CD8-positive, alpha-beta T cell (primary cell): ENCODE measurements at regions of chr12 and their contacts with region 1.

Region 1: GRCh38 chr12:44930972-44931600 is 55.0 kb upstream of the NELL2 start:
- DNase-seq: peak in 3 of 9 experiments; percentile 11 to 76 (median 63)
- ATAC-seq: peak; percentile 58
- H3K4me3 ChIP-seq: no peak overlapping the region
- H3K4me3 Mint-ChIP-seq: no peak overlapping the region
- H3K27ac ChIP-seq: no peak overlapping the region
- H3K27ac Mint-ChIP-seq: no peak overlapping the region
- H3K4me1 ChIP-seq: peaks cover 5% of the 10 kb centered on the region
- H3K4me1 Mint-ChIP-seq: peaks cover 10% of the 10 kb centered on the region
- H3K27me3 ChIP-seq: no peaks in the 10 kb centered on the region
- H3K27me3 Mint-ChIP-seq: no peaks in the 10 kb centered on the region
- CTCF ChIP-seq: peak; percentile 80

Region 2: GRCh38 chr12:43957732-43958372 is 973.2 kb before region 1 on chr12:
- CTCF ChIA-PET with region 1: no interaction called
- POLR2A ChIA-PET with region 1: no interaction called
- intact Hi-C with region 1: loop called in 1 of 2 experiments (anchors 1 kb)
- DNase-seq: peak in 2 of 9 experiments; percentile 30 to 45
- ATAC-seq: no peak
- H3K4me3 ChIP-seq: no peak overlapping the region
- H3K4me3 Mint-ChIP-seq: no peak overlapping the region
- H3K27ac ChIP-seq: no peak overlapping the region
- H3K27ac Mint-ChIP-seq: no peak overlapping the region
- H3K4me1 ChIP-seq: no peaks in the 10 kb centered on the region
- H3K4me1 Mint-ChIP-seq: peaks cover 6% of the 10 kb centered on the region
- H3K27me3 ChIP-seq: no peaks in the 10 kb centered on the region
- H3K27me3 Mint-ChIP-seq: no peaks in the 10 kb centered on the region
- CTCF ChIP-seq: no peak

Region 3: DNA sequence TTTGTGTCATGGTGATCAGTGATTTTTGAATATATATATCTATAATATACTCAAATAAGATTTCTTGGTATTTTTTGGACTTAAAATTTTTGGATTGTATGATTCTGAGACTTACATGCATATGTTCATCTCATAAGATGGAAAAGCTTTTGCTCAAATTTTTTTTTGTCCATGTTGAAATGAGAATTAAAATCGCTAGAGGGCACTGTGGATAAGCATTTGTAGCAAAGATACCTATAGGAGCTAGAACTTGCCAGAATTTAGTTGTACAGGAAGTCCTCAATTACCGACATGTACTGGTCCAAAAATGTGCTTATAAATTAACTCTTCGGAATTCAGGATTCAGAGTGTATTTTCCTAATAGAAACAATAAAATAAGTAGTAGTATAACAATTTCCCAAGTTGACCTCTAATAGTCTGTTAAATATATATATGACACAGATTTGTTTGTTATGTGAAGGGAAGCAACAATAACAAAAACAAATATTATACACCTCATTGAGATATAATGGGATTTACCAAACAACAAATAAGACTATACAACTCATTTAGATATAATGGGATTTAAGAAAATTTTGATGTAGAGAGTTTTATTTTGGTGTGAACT is 915.6 kb before region 1 on chr12:
- CTCF ChIA-PET with region 1: interaction called, 11 read pairs
- POLR2A ChIA-PET with region 1: no interaction called
- intact Hi-C with region 1: loop called (anchors 1 kb)
- DNase-seq: peak in 2 of 9 experiments; percentile 48 to 65
- ATAC-seq: peak; percentile 52
- H3K4me3 ChIP-seq: no peak overlapping the region
- H3K4me3 Mint-ChIP-seq: no peak overlapping the region
- H3K27ac ChIP-seq: no peak overlapping the region
- H3K27ac Mint-ChIP-seq: no peak overlapping the region
- H3K4me1 ChIP-seq: no peaks in the 10 kb centered on the region
- H3K4me1 Mint-ChIP-seq: peaks cover 2% of the 10 kb centered on the region
- H3K27me3 ChIP-seq: no peaks in the 10 kb centered on the region
- H3K27me3 Mint-ChIP-seq: no peaks in the 10 kb centered on the region
- CTCF ChIP-seq: peak; percentile 71

Region 4: DNA sequence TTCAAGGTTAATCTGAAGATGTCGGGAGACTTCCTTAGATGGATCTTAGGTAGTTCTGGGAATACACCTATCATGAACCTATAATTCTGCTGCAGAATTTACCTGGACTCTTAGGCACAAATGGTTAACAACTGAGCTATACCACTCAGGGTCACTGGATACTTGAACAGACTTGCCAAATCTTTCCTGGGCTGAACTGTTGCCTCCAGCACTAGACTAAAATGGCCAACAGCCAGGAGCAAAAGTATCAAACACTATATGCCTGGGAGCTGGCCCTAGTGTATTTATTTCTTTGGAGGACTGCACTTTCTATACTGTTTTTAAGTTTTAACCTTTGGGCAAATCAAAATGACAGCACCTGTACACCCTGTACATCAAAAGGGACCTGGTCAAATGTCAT is 842.4 kb before region 1 on chr12:
- CTCF ChIA-PET with region 1: no interaction called
- POLR2A ChIA-PET with region 1: no interaction called
- intact Hi-C with region 1: no loop called
- DNase-seq: no peak
- ATAC-seq: no peak
- H3K4me3 ChIP-seq: no peak overlapping the region
- H3K4me3 Mint-ChIP-seq: no peak overlapping the region
- H3K27ac ChIP-seq: no peak overlapping the region
- H3K27ac Mint-ChIP-seq: no peak overlapping the region
- H3K4me1 ChIP-seq: no peaks in the 10 kb centered on the region
- H3K4me1 Mint-ChIP-seq: no peaks in the 10 kb centered on the region
- H3K27me3 ChIP-seq: no peaks in the 10 kb centered on the region
- H3K27me3 Mint-ChIP-seq: no peaks in the 10 kb centered on the region
- CTCF ChIP-seq: no peak

Region 5: GRCh38 chr12:44317651-44318126 is 613.4 kb before region 1 on chr12:
- CTCF ChIA-PET with region 1: interaction called, 8 read pairs
- POLR2A ChIA-PET with region 1: no interaction called
- intact Hi-C with region 1: loop called in 1 of 2 experiments (anchors 5 kb)
- DNase-seq: peak in 2 of 9 experiments; percentile 12 to 26
- ATAC-seq: no peak
- H3K4me3 ChIP-seq: no peak overlapping the region
- H3K4me3 Mint-ChIP-seq: no peak overlapping the region
- H3K27ac ChIP-seq: no peak overlapping the region
- H3K27ac Mint-ChIP-seq: no peak overlapping the region
- H3K4me1 ChIP-seq: no peaks in the 10 kb centered on the region
- H3K4me1 Mint-ChIP-seq: no peaks in the 10 kb centered on the region
- H3K27me3 ChIP-seq: no peaks in the 10 kb centered on the region
- H3K27me3 Mint-ChIP-seq: no peaks in the 10 kb centered on the region
- CTCF ChIP-seq: no peak

Region 6: GRCh38 chr12:44510510-44510909 is 420.6 kb before region 1 on chr12:
- CTCF ChIA-PET with region 1: interaction called, 4 read pairs
- POLR2A ChIA-PET with region 1: no interaction called
- intact Hi-C with region 1: loop called in 1 of 2 experiments (anchors 10 kb)
- DNase-seq: no peak
- ATAC-seq: no peak
- H3K4me3 ChIP-seq: no peak overlapping the region
- H3K4me3 Mint-ChIP-seq: no peak overlapping the region
- H3K27ac ChIP-seq: no peak overlapping the region
- H3K27ac Mint-ChIP-seq: no peak overlapping the region
- H3K4me1 ChIP-seq: no peaks in the 10 kb centered on the region
- H3K4me1 Mint-ChIP-seq: no peaks in the 10 kb centered on the region
- H3K27me3 ChIP-seq: no peaks in the 10 kb centered on the region
- H3K27me3 Mint-ChIP-seq: no peaks in the 10 kb centered on the region
- CTCF ChIP-seq: no peak

Region 7: DNA sequence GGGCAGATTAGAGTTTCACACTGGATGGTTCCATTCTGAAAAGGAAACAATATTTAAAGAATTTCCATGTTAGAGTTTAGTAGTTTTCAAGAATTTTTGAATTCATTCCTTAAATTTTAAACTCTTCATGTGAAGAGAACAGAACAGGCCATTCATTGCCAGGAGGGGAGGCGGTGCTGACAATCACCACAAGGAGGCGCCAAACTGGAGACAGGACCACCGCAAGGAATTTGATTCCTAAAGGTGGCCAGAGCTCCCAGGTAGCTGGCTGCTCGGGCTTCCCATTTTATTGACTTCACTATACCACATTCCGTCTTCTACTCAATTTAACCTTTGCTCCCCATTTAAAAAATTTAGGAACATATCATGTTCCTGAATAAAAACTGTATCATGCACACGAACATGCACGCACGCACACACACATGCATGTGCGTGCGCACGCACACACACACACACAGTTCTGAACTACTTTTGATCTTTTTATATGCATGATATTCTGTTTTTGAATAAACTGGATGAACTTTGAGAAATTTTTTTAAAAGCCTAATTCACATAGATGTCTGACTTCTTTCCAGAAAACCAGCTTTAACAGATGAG is 156.2 kb before region 1 on chr12:
- CTCF ChIA-PET with region 1: interaction called, 30 read pairs
- POLR2A ChIA-PET with region 1: no interaction called
- intact Hi-C with region 1: loop called (anchors 1 kb)
- DNase-seq: peak; percentile 37 to 81 (median 67)
- ATAC-seq: peak; percentile 58
- H3K4me3 ChIP-seq: no peak overlapping the region
- H3K4me3 Mint-ChIP-seq: no peak overlapping the region
- H3K27ac ChIP-seq: no peak overlapping the region
- H3K27ac Mint-ChIP-seq: no peak overlapping the region
- H3K4me1 ChIP-seq: no peaks in the 10 kb centered on the region
- H3K4me1 Mint-ChIP-seq: peaks cover 15% of the 10 kb centered on the region
- H3K27me3 ChIP-seq: no peaks in the 10 kb centered on the region
- H3K27me3 Mint-ChIP-seq: no peaks in the 10 kb centered on the region
- CTCF ChIP-seq: peak; percentile 93

Region 8: GRCh38 chr12:44960423-44960822 is 29.3 kb after region 1 on chr12:
- CTCF ChIA-PET with region 1: no interaction called
- POLR2A ChIA-PET with region 1: no interaction called
- intact Hi-C with region 1: no loop called
- DNase-seq: no peak
- ATAC-seq: no peak
- H3K4me3 ChIP-seq: no peak overlapping the region
- H3K4me3 Mint-ChIP-seq: no peak overlapping the region
- H3K27ac ChIP-seq: no peak overlapping the region
- H3K27ac Mint-ChIP-seq: no peak overlapping the region
- H3K4me1 ChIP-seq: no peaks in the 10 kb centered on the region
- H3K4me1 Mint-ChIP-seq: no peaks in the 10 kb centered on the region
- H3K27me3 ChIP-seq: no peaks in the 10 kb centered on the region
- H3K27me3 Mint-ChIP-seq: no peaks in the 10 kb centered on the region
- CTCF ChIP-seq: no peak